GM13976 (cell line): ENCODE measurements at regions of chr1 and their contacts with region 1.

Region 1: GRCh38 chr1:93629099-93630059 is 52.3 kb downstream of the BCAR3 start:
- DNase-seq: peak; percentile 64
- CTCF ChIP-seq: peak; percentile 64

Region 2: DNA sequence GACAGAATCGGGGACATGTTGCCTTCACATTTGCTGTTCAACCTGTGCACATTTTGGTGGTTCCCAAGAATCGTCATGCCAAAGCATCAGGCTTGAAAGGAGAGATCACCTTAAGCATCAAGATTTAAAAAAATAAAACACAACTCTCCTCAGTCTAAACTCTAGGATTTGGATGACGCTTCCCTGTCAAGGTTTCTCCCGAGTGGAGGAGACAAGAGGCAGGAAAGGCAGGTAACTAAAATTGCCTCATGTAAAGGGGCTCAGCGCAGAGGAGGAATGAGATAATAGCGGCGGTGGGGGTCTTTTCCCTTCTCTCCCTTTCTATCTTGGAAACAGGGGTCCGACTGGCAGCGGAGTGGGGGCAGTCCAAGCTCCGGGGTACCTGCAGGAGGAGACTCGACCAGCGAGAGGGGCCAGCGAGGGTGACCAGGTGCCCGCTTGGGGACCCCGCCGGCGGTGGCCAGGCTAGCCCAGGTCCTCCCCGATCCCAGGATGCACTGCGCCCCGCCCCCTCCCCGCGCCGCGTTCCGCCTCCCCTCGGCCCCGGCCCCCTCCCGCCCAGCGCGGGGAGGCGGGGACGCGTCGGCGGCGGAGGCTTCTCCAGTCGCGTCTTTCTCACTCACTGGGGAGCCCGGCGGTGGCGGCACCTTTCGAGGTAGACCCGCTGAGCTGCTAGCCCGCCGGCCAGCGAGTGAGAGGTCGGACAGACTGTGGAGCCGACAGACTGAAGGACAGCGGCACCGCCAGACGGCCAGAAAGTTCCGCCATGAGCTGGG is 181.7 kb before region 1 on chr1 and contains the start of gene FNBP1L:
- in situ Hi-C with region 1: loop called (anchors 10 kb)
- DNase-seq: peak; percentile 75
- CTCF ChIP-seq: no peak

Region 3: GRCh38 chr1:93758842-93759515 is 129.6 kb after region 1 on chr1:
- in situ Hi-C with region 1: no loop called
- DNase-seq: no peak
- CTCF ChIP-seq: no peak

Region 4: DNA sequence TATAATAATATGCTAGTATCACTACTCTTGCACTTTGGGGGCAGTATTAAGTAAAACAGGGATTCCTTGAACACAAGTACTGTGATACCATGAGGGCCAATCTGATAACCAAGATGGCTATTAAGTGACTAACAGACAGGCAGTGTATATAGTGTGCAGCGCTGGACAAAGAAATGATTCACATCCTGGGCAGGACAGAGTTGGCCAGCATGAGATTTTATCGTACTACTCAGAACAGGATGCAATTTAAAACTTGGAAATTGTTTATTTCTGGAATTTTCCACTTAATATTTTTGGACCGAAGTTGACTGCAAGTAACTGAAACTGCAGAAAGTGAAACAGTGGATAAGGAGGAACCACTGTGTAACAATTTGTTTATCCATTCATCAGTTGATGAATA is 175.0 kb after region 1 on chr1:
- in situ Hi-C with region 1: loop called (anchors 10 kb)
- DNase-seq: no peak
- CTCF ChIP-seq: no peak

Region 5: DNA sequence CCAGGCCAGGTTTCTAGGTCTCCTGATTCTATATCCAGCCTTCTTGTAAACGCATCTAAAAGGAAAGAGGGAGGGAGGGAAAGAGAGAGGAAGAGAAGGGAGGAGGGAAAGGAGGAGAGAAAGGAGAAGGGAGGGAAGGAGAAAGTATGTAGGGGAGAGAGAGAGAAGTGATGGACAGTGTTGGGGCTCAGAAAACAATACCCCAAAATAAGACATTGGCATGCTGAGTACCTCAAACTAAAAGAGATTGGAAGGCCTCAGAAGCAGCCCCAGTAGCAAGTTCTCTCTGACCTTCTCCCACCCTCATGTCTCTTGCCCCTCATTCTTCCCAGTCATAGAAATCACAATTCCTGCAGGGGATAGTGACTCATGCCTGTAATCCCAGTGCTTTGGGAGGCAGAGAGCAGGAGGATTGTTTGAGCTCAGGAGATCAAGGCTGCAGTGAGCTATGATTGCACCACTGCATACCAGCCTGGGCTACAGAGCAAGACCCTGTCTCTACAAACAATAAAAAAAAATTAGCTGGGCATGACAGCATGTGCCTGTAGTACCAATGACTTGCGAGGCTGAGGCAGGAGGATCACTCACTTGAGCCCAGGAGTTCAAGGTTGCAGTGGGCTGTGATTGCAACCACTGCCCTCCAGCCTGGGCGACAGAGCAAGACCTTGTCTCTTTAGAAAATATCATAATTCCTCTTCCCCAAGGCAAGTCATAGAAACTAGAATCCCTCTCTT is 198.4 kb after region 1 on chr1:
- in situ Hi-C with region 1: loop called (anchors 5 kb)
- DNase-seq: no peak
- CTCF ChIP-seq: no peak